ENCODE measurements at regions of chr2 and their contacts with region 1.

Region 1: DNA sequence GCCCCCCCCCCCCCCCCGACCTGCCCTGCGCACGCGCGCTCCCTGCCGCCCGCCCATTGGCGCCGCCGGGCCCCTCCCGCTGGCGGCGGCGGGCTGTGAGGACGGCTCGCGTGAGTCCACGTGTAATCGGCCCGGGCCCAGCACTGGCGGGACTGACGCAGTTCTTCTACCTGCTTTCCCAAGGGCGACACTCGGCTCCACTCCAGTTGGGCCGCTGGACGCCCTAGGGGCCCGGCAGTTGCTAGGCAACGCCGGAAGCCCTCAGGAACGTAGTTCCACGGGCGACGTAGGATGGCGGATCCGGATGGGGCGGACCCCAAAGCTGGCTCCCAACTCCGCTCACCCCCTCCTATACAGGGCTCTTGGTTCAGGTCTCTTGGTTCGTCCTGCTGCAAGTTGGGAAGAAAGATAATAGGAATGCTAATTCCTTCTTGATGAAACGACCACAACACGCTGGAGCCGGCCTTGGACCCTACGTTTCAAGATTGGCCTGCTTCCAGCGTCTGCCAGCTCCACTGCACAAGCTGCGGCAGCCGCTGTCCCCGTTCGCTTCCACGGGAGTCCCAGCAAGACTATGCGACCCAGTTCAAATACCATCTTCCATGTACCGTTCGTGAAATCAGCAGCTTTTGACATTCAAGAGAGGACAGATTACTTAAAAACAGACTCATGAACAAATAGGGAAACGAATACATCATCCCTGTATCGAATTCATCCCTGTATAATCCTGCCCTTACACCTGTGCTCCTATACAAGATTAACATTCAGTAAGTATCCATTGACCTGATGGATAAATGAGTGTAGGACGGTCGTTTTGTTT is 415 bp upstream of the MCFD2 start:
- DNase-seq: peak; percentile 26
- H3K4me3 ChIP-seq: peak overlapping the region; percentile 72 to 96 (median 86)
- H3K27ac ChIP-seq: peak overlapping the region; percentile 93 to 99 (median 97)
- H3K4me1 ChIP-seq: peaks cover 22 to 47% (median 25%) of the 10 kb centered on the region in 3 donors
- H3K27me3 ChIP-seq: no peaks in the 10 kb centered on the region
- CTCF ChIP-seq: no peak
- POLR2A ChIP-seq: peak in 3 of 4 donors; percentile 37 to 75 (median 40)

Region 2: DNA sequence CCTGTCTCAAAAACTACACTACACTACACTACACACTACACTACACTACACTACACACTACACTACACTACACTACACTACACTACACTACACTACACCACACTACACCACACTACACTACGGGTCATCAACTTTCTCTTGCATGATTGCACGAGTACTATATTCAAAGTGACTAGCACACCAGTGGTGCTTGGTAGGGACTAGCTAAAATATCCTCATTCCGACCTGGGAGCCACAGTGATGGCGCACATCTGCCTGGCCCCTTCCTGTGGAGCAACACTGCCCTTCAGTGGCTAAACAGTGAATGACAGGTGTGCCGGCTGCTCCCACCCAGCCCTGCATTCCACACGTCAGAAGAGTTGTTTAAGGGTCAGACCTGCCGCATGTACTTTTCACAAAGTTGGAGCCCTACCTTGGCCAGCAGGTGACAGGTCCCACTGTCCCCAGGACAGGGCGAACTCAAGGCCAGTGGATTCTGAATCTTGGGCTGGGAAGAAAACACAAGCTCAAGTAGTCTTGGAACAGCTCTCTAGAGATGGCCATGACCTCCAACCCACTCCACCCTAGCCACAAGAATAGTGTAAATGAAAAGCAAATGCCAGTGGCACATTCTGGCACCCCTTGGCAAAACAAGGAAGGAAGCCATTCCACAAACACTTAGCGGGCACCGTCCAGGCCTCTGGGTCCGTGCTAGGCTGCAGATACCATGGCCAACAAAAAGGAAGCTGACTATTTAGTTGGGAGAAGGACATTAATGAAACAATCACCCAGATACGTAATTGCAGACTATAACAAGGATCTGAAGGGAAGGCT is 407.2 kb after region 1 on chr2:
- intact Hi-C with region 1: loop called (anchors 10 kb)
- DNase-seq: peak; percentile 24
- H3K4me3 ChIP-seq: no peak overlapping the region
- H3K27ac ChIP-seq: no peak overlapping the region
- H3K4me1 ChIP-seq: peaks cover 0 to 10% (median 0%) of the 10 kb centered on the region in 3 donors
- H3K27me3 ChIP-seq: no peaks in the 10 kb centered on the region
- CTCF ChIP-seq: peak; percentile 85 to 99 (median 96)
- POLR2A ChIP-seq: no peak

Measured in esophagus squamous epithelium (tissue), 5 donors.